Aorta (tissue), 5 donors: ENCODE measurements at regions of chr6 and their contacts with region 1.

Region 1: DNA sequence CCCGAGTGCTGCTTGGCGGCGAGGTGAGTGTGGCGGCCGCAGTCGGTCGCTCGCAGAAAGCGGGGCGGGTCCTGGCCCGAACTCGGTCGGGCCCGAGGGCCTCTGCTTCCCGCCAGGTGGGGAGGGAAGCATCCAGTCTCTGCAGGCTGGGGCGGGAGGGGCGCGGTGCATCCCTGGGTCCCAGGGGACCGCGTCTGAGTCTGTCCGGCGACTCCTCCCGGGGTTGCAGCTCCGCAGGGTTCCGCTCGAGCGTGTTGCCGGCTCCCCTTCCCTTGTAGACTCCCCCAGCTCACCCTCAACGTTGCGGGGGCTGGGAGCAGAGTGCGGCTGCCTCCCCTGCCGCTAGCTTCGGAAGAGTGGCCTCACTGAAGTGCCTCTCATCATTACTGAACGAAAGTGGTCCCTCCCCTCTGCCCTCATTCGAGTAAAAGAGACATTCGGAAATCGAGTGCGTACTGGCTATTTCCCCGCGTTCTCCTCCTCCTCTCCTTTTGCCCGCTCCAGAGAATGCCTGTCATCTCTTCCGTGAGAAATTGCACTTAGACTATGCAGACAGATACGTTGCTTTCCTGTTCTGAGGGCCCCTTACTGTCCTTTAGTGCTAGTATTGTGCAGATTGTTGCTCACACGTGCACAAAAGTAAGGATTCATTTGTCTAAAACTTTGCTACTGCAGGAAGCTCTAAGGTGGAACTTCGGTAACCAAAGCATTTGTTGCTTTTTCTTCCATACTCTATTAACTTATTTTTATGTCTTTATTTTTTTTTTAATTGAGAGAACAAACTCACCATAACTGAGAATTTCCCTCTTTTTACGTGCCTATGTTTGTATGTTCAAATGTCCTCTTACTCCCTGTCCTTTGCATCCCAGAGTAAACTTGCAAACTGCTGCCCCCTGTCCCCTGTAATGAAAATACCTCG is 751 bp downstream of the MAP3K4 start:
- DNase-seq: peak in 1 of 2 donors; percentile 64
- ATAC-seq: peak; percentile 69
- H3K4me3 ChIP-seq: peak overlapping the region; percentile 50 to 88
- H3K27ac ChIP-seq: peak overlapping the region; percentile 23 to 56
- H3K4me1 ChIP-seq: peaks cover 0 to 4% of the 10 kb centered on the region in 2 donors
- H3K27me3 ChIP-seq: no peaks in the 10 kb centered on the region

Region 2: GRCh38 chr6:160949531-160949930 is 42.8 kb before region 1 on chr6:
- intact Hi-C with region 1: loop called in 1 of 2 experiments (anchors 5 kb)
- DNase-seq: no peak
- ATAC-seq: no peak
- H3K4me3 ChIP-seq: no peak overlapping the region
- H3K27ac ChIP-seq: peak overlapping the region in 1 of 2 donors; percentile 70
- H3K4me1 ChIP-seq: no peaks in the 10 kb centered on the region
- H3K27me3 ChIP-seq: no peaks in the 10 kb centered on the region